Transverse colon (tissue), 4 donors: ENCODE measurements at regions of chr17 and their contacts with region 1.

Region 1: DNA sequence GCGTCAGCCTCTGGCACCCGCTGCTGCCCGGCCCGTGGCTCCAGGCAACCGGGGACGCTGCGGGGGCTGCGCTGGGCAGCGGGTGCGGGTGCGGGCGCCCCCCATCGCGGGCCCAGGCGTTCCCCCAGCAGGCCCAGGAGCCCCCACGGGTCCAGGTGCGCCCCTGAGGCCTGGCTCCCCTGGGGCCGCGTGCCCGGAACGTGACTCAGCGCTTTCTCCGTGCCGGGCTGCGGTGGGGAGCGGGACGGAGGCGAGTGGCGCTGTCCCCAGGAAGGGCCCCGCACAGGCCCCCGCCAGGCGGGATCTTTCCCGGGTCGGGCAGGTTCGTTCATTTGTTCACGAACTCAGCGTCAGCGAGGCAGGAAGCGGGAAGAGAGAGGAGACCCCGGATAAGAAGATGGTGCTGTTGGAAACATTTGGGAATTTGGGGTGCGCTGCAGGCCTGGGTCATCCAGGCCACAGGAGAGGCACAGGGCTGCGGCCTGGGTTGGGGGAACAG is 18.4 kb upstream of the EXOC7 start:
- DNase-seq: no peak
- H3K4me3 ChIP-seq: peak overlapping the region in 2 of 4 donors; percentile 34 to 42
- H3K27ac ChIP-seq: no peak overlapping the region
- H3K4me1 ChIP-seq: peaks cover 0 to 10% (median 6%) of the 10 kb centered on the region in 4 donors
- H3K27me3 ChIP-seq: no peaks in the 10 kb centered on the region
- CTCF ChIP-seq: no peak
- EP300 ChIP-seq: no peak
- POLR2A ChIP-seq: no peak

Region 2: DNA sequence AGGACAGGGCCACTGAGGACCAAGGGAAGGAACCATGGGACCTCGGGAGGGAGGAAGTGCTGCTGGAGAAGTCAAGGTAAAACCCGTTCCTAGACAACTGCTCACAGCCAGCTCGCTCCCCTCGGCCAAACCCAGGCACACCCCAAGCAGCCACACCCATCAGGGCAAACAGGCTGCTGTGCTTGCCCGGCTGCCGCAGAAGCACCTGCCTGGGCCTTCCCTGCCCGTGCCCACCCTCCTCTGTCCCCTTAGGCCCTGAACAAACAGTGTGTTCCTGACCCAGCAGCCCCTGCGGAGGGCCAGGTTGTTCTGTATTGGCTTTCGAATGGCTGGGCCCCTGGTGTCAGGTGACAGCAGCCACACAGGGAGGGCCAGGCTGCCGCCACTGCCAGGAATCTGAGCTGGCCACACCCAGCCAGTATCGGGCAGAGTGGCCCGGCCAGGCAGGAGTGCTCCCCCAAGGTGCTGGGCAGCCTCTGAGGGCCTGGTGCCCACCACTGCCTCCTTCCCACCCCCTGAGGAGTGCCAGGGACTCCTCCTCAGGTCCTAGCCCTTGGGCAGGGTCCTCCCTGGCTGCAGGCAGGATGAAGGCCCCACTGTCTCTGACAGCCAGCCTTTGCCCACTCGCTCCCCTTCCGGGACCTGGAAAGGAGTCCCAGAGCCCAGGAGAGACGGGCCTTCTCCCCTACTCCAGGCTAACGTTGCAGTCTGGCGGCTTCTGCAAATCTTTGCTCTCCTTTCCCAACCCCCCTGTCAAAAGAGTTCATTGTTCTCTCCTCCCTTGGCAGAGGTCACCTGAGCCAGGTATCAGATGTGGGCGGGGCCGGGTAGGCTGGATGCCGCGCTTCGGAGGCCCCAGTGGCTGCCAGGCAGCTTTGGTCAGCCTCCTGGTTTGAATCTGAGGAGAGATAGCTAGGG is 572.5 kb before region 1 on chr17:
- in situ Hi-C with region 1: no loop called
- intact Hi-C with region 1: no loop called
- DNase-seq: peak; percentile 87
- H3K4me3 ChIP-seq: peak overlapping the region in 1 of 4 donors; percentile 6
- H3K27ac ChIP-seq: peak overlapping the region; percentile 93 to 98 (median 95)
- H3K4me1 ChIP-seq: peaks cover 0 to 38% (median 25%) of the 10 kb centered on the region in 4 donors
- H3K27me3 ChIP-seq: no peaks in the 10 kb centered on the region
- CTCF ChIP-seq: peak in 1 of 5 experiments; percentile 8
- EP300 ChIP-seq: peak; percentile 81
- POLR2A ChIP-seq: peak; percentile 95

Region 3: GRCh38 chr17:76182016-76182764 is 60.2 kb after region 1 on chr17:
- in situ Hi-C with region 1: loop called in 2 of 4 experiments (anchors 10 kb)
- intact Hi-C with region 1: no loop called
- DNase-seq: peak; percentile 93
- H3K4me3 ChIP-seq: no peak overlapping the region
- H3K27ac ChIP-seq: no peak overlapping the region
- H3K4me1 ChIP-seq: peaks cover 0 to 7% (median 3%) of the 10 kb centered on the region in 4 donors
- H3K27me3 ChIP-seq: no peaks in the 10 kb centered on the region
- CTCF ChIP-seq: peak; percentile 78 to 92 (median 88)
- EP300 ChIP-seq: no peak
- POLR2A ChIP-seq: no peak

Region 4: DNA sequence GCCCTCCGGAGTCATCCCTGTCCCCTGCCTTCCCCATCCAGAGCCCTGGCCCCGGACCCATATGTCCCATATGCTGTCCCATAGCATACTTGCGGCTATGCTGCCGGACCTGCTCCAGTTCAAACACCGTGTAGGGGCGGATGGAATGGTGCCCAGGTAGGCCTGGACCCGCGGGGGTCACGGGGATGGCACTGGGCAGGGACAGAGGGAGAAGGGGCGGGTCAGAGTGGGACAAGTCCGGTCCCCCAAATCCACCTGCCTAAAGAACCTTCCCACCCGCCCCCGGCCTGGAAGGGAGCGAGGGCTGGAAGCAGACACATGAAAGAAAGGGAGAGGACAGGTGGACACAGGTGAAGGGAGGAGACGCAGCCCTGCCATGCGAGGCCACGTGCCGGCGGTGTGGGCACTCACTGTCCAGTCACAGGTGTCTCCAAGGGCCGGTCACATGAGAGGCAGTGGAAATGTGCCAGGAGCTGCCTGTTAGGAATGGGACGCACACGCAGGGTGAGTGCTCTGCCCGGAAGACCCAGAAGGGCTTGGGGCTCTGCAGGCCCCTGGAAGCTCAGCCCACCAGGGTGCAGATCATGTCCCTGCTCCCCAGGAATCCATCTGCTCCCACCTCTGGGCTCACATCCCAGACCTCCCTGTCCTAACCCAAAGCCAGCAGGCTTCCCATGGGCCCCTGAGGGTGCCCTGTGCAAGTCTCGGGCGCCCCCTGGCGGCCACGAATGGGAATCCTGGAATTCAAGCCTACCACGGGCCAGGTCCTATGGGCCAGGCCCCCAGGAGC is 157.2 kb after region 1 on chr17:
- in situ Hi-C with region 1: loop called in 3 of 4 experiments (anchors 5 to 10 kb)
- intact Hi-C with region 1: loop called (anchors 5 kb)
- DNase-seq: peak; percentile 91
- H3K4me3 ChIP-seq: no peak overlapping the region
- H3K27ac ChIP-seq: peak overlapping the region in 1 of 4 donors; percentile 1
- H3K4me1 ChIP-seq: peaks cover 0 to 7% (median 2%) of the 10 kb centered on the region in 4 donors
- H3K27me3 ChIP-seq: no peaks in the 10 kb centered on the region
- CTCF ChIP-seq: peak; percentile 95 to 98 (median 98)
- EP300 ChIP-seq: no peak
- POLR2A ChIP-seq: no peak

Region 5: DNA sequence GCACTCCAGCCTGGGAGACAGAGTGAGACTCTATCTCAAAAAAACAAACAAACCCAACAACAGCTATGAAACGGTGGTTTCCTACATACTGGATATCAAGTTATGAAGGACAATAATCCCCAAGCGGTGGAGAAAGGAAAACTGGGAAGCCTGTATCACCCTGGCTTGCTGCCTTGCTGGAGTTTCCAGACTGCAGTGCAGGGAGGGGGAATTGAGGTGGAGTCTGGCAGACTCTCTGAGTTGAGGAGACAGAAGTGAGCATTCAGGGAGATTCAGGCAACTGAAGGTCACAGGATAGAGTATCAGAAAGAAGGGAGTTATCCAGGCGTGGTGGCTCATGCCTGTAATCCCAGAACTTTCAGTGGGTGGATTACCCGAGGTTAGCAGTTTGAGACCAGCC is 174.2 kb after region 1 on chr17:
- in situ Hi-C with region 1: loop called in 1 of 4 experiments (anchors 5 kb)
- intact Hi-C with region 1: no loop called
- DNase-seq: no peak
- H3K4me3 ChIP-seq: no peak overlapping the region
- H3K27ac ChIP-seq: peak overlapping the region; percentile 8 to 67 (median 52)
- H3K4me1 ChIP-seq: peaks cover 0 to 16% (median 11%) of the 10 kb centered on the region in 4 donors
- H3K27me3 ChIP-seq: no peaks in the 10 kb centered on the region
- CTCF ChIP-seq: peak in 1 of 5 experiments; percentile 5
- EP300 ChIP-seq: no peak
- POLR2A ChIP-seq: no peak